Mammary epithelial cell (primary cell): ENCODE measurements at regions of chr6 and their contacts with region 1.

Region 1: DNA sequence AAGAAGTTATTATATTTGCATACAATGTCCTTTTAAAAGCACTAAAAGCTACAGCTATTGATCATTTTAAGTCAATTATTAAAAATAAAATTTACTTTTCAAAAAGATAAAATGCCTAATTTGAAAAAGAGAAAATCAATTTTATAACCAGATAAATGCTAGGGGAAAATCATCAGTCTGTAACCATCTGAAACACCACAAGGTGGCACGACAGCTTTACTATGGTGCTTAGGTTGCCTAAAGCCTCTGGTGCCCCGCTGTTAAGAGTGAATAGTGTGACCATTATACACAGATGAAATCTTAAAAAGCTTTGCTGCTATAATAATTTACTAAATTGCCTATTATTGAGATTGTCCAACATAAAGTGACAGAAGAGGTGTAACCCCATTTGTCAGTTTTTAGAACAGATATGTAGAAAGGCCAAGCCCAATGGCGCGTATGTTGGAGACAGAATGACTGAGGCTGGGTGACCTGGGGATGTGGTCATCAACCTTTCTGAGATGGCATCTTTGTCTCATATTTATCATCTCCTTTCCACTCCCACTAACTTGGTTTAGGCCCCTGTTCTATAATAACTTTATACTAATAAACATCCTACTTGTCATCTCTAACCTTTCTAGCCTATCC is 100.8 kb downstream of the MOXD1 start:
- DNase-seq: peak; percentile 39
- H3K4me3 ChIP-seq: no peak overlapping the region
- H3K27ac ChIP-seq: no peak overlapping the region
- H3K4me1 ChIP-seq: no peaks in the 10 kb centered on the region
- H3K27me3 ChIP-seq: no peaks in the 10 kb centered on the region
- CTCF ChIP-seq: peak; percentile 55 to 72

Region 2: DNA sequence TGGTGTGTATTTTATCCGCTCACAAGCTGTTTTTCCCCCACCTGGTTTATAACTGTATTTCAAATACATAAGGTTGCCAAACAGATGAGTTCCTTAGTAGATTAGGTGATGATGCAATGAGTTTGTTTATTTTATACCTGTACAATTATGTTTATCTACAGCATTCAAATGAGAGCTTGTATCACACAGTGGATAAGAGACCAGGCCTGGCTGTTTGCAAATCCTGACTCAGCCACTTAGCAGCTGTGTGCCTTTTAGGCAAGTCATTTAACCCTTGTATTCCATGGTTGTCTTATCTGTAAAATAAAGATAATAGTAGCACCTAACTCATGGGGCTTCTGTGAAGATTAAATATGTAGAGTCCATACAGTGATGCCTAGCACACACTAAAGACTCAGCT is 42.9 kb before region 1 on chr6:
- CTCF ChIA-PET with region 1: no interaction called
- dilution Hi-C with region 1: no loop called
- in situ Hi-C with region 1: no loop called
- intact Hi-C with region 1: no loop called
- DNase-seq: no peak
- H3K4me3 ChIP-seq: no peak overlapping the region
- H3K27ac ChIP-seq: no peak overlapping the region
- H3K4me1 ChIP-seq: peaks cover 5% of the 10 kb centered on the region
- H3K27me3 ChIP-seq: no peaks in the 10 kb centered on the region
- CTCF ChIP-seq: no peak

Region 3: DNA sequence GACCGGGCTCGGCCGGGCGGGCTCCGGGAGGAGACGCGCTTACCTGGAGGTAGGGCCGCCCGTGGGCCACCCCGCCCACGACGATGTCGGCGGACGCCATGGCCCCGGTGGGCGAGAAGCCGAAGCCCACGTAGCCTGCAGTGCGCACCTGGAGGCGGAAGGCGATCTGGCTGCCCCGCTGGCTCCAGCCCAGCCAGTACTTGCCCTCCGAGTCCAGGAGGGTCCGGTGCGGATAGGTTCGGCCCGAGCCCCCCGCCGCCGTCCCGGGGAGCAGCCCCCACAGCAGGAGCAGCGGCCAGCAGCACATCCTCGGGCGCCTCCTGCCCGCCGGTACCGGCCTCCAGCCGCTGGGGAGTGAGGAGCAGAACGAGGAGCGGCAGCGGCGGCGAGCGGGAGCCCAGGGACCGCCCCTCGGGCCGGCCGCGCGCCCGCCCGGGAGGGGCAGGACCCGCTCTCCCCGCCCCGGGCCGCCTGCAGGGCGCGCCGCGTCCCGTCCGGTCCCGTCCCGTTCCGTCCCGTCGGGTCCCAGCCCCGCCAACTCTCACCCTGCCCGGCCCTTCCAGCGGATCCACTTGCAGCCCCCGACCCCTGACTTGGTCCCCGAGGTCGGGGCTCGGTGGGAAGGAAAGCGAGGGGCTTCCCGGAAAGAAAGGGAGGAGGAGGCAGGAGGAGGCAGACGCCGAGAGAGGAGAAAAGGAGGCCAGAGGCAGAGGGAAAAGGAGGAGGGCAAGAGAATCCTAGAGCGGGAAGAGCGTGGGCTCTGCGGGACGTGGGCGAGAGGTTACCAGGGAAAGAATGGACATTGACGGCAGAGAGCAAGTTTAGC is 100.9 kb after region 1 on chr6 and contains the start of gene MOXD1:
- CTCF ChIA-PET with region 1: no interaction called
- dilution Hi-C with region 1: no loop called
- in situ Hi-C with region 1: loop called in 1 of 2 experiments (anchors 10 kb)
- intact Hi-C with region 1: loop called (anchors 2 kb)
- DNase-seq: peak; percentile 35
- H3K4me3 ChIP-seq: peak within 1 kb of the TSS; percentile 68 to 92 (median 88)
- H3K27ac ChIP-seq: no peak within 1 kb of the TSS
- H3K4me1 ChIP-seq: peaks cover 9% of the 10 kb centered on the region
- H3K27me3 ChIP-seq: peaks cover 2% of the 10 kb centered on the region
- CTCF ChIP-seq: no peak
- total RNA-seq, gene MOXD1: 3.6 to 14.0 TPM

Region 4: GRCh38 chr6:132483779-132484679 is 183.6 kb after region 1 on chr6:
- CTCF ChIA-PET with region 1: interaction called, 3 read pairs
- dilution Hi-C with region 1: loop called (anchors 25 kb)
- in situ Hi-C with region 1: loop called (anchors 5 to 10 kb)
- intact Hi-C with region 1: loop called (anchors 1 kb)
- DNase-seq: peak; percentile 39
- H3K4me3 ChIP-seq: no peak overlapping the region
- H3K27ac ChIP-seq: no peak overlapping the region
- H3K4me1 ChIP-seq: peaks cover 6% of the 10 kb centered on the region
- H3K27me3 ChIP-seq: no peaks in the 10 kb centered on the region
- CTCF ChIP-seq: peak; percentile 63 to 68